Calu3 (cell line): ENCODE measurements at regions of chr10 and their contacts with region 1.

Region 1: GRCh38 chr10:30413996-30414576 is 19.9 kb upstream of the MAP3K8 start:
- DNase-seq: peak; percentile 51
- H3K4me3 Mint-ChIP-seq: no peak overlapping the region
- H3K27ac Mint-ChIP-seq: no peak overlapping the region
- H3K4me1 Mint-ChIP-seq: peaks cover 16% of the 10 kb centered on the region
- H3K27me3 Mint-ChIP-seq: no peaks in the 10 kb centered on the region
- CTCF ChIP-seq: peak; percentile 71

Region 2: DNA sequence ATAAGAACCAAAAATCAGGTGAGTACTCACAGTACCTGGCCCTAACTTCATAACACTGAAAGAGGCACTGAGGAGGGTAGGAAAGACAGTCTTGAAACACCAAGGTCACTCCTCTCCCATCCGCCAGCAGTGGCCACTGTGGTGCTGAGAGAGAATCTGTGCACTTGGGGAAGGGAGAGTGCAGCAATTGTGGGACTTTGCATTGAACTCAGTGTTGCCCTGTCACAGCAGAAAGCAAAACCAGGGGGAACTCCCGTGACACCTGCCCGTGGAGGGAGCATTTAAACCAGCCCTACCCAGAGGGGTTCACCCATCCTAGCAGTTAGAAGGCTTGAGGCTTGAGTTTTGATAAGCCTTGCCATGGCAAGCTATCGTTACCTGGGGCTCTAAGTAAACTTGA is 15.3 kb before region 1 on chr10:
- CTCF ChIA-PET with region 1: no interaction called
- intact Hi-C with region 1: no loop called
- DNase-seq: no peak
- H3K4me3 Mint-ChIP-seq: no peak overlapping the region
- H3K27ac Mint-ChIP-seq: no peak overlapping the region
- H3K4me1 Mint-ChIP-seq: no peaks in the 10 kb centered on the region
- H3K27me3 Mint-ChIP-seq: peaks cover 14% of the 10 kb centered on the region
- CTCF ChIP-seq: no peak

Region 3: DNA sequence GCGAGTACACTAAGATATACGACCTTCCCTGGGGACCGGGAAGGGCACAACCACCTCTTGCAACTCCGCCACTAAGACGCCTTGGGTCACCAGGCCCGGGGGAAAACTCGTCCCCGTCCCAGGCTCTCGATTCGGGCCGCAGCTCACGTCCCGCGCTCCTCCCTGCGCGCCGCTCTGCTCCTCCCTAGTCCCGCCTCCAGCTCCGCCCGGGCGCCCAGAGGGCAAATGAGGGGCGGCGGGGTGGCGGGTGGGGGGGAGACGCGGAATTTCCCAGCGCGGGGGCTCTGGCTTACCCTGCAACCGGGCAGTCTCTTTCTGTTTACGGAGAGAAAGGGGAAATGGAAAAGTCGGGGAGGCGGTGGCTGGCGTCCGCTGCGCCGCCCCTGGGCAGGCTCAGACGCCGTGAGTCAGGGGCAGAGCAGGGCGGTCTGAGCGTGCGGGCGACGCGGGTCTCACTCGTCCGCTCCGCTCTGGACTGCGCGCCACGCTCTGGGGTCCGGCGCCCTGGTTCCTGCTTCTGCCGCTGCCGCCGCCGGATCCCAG is 19.7 kb after region 1 on chr10 and contains the start of gene MAP3K8:
- CTCF ChIA-PET with region 1: interaction called, 7 read pairs
- intact Hi-C with region 1: loop called (anchors 2 kb)
- DNase-seq: peak; percentile 88
- H3K4me3 Mint-ChIP-seq: peak within 1 kb of the TSS; percentile 96
- H3K27ac Mint-ChIP-seq: peak within 1 kb of the TSS; percentile 95
- H3K4me1 Mint-ChIP-seq: peaks cover 39% of the 10 kb centered on the region
- H3K27me3 Mint-ChIP-seq: no peaks in the 10 kb centered on the region
- CTCF ChIP-seq: no peak
- total RNA-seq, gene MAP3K8: 13.2 and 20.6 TPM in 2 replicates